Natural killer cell (primary cell): ENCODE measurements at regions of chr4 and their contacts with region 1.

Region 1: GRCh38 chr4:118772081-118772766 is 63.7 kb downstream of the SEC24D start:
- DNase-seq: peak in 1 of 2 donors; percentile 66
- ATAC-seq: peak; percentile 69 to 74 (median 74)
- H3K4me3 ChIP-seq: no peak overlapping the region
- H3K4me3 Mint-ChIP-seq: no peak overlapping the region
- H3K27ac ChIP-seq: no peak overlapping the region
- H3K27ac Mint-ChIP-seq: no peak overlapping the region
- H3K4me1 ChIP-seq: no peaks in the 10 kb centered on the region
- H3K4me1 Mint-ChIP-seq: no peaks in the 10 kb centered on the region
- H3K27me3 ChIP-seq: no peaks in the 10 kb centered on the region
- H3K27me3 Mint-ChIP-seq: no peaks in the 10 kb centered on the region
- CTCF ChIP-seq: peak; percentile 70

Region 2: GRCh38 chr4:118810991-118811764 is 39.0 kb after region 1 on chr4:
- intact Hi-C with region 1: no loop called
- DNase-seq: no peak
- ATAC-seq: no peak
- H3K4me3 ChIP-seq: no peak overlapping the region
- H3K4me3 Mint-ChIP-seq: no peak overlapping the region
- H3K27ac ChIP-seq: no peak overlapping the region
- H3K27ac Mint-ChIP-seq: no peak overlapping the region
- H3K4me1 ChIP-seq: no peaks in the 10 kb centered on the region
- H3K4me1 Mint-ChIP-seq: peaks cover 0 to 5% of the 10 kb centered on the region in 2 donors
- H3K27me3 ChIP-seq: no peaks in the 10 kb centered on the region
- H3K27me3 Mint-ChIP-seq: no peaks in the 10 kb centered on the region
- CTCF ChIP-seq: no peak

Region 3: DNA sequence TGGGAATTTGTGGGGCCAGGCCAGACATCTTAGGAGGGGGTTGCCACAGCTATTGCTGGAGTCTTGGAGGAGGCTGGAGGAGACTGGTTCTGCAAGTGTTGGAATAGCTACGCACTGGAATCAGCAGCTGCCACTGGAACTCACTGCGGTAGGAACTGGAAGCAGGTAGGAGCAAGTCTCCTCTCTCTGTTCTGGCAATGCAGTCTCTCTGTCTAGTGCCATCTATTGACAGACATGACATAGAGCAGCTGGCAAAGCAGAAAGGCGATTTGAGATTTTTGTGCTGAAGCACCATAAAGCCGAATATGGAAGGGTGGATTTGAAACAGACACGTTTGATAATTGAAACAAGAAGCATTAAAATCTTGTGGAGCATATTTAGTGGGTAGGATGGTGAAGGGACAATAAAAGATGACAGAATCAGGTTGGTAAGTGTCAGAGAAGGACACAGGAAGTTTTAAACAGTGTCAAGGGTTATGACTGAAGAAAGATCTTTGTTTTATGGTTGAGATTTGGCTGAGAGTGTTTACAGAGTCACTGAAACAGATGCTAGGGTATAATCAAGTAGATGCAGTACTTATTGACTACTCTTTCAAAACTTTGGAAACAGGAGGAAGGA is 93.0 kb after region 1 on chr4:
- intact Hi-C with region 1: loop called (anchors 1 kb)
- DNase-seq: peak in 1 of 2 donors; percentile 56
- ATAC-seq: peak; percentile 55 to 68 (median 58)
- H3K4me3 ChIP-seq: no peak overlapping the region
- H3K4me3 Mint-ChIP-seq: no peak overlapping the region
- H3K27ac ChIP-seq: no peak overlapping the region
- H3K27ac Mint-ChIP-seq: no peak overlapping the region
- H3K4me1 ChIP-seq: no peaks in the 10 kb centered on the region
- H3K4me1 Mint-ChIP-seq: no peaks in the 10 kb centered on the region
- H3K27me3 ChIP-seq: no peaks in the 10 kb centered on the region
- H3K27me3 Mint-ChIP-seq: no peaks in the 10 kb centered on the region
- CTCF ChIP-seq: peak; percentile 38

Region 4: DNA sequence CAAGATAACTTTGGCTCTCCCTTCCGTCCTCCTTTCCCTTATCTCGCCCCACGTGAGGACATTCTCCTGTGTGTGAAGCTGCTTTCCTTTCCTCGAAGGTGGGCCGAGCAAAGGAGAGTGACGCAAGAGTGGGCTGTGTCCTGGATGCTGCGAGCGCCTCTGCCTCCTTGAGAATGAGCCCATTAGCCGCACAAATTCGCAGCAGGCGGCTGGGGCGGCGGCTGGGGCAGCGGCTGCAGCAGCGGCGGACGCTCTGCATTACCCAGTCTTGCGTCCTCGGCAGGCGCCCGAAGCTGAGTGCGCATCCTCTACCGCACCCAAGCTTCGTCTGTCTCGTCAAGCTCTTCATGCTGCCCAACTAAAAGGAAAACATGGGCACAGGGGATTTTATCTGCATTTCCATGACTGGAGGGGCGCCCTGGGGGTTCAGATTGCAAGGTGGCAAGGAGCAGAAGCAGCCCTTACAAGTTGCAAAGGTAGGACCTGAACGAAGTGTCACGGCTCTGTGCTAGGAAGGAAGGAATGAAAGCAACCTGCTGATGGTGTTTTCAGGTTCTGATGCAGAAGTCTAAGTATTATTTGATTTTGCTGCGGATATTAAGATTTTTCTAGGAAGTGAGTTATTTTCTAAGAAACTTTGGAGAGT is 116.6 kb after region 1 on chr4 and contains the start of gene SYNPO2:
- intact Hi-C with region 1: loop called (anchors 1 kb)
- DNase-seq: peak in 1 of 2 donors; percentile 34
- ATAC-seq: peak; percentile 36 to 70 (median 59)
- H3K4me3 ChIP-seq: no peak within 1 kb of the TSS
- H3K4me3 Mint-ChIP-seq: peak within 1 kb of the TSS; percentile 55
- H3K27ac ChIP-seq: no peak within 1 kb of the TSS
- H3K27ac Mint-ChIP-seq: no peak within 1 kb of the TSS
- H3K4me1 ChIP-seq: peaks cover 6% of the 10 kb centered on the region
- H3K4me1 Mint-ChIP-seq: peaks cover 13 to 16% of the 10 kb centered on the region in 2 donors
- H3K27me3 ChIP-seq: peaks cover 16% of the 10 kb centered on the region
- H3K27me3 Mint-ChIP-seq: peaks cover 23 to 43% of the 10 kb centered on the region in 2 donors
- CTCF ChIP-seq: no peak
- total RNA-seq, gene SYNPO2: 0.18 to 0.85 (median 0.56) TPM